ENCODE measurements at regions of chr5 and their contacts with region 1.

Region 1: DNA sequence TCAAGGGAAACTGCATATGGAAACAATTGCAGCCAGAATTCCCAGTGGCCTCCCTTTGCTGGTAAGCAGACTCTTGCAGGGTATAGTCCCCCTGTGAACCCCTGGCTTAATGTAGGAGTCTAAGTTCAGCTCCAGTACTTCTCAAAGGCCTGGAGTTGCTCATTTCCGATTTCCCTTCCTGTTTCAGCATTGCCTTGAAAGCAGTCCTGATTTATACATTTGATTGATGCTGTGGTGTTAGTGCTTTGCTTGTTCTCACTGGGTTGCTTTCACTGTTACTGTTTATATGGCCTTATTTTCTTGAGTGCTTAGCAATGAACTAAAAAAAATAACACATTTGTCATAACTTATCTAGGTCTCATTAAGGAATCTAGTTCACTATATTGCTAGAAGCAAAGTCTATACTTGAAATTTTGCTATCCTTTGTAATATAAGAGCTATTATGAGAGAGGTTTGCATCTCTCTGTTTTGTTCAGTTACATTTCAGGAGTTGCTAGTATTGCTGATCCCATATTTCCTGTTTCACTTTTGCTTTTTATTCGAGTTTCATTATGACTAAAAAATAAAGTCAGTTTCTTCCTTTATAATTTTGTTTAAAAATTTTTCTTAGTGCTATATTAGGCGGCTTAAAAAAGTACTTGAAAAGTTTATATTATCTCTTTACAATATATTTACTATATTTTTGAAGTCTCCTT is 122.4 kb upstream of the NMUR2 start:
- DNase-seq: no peak
- H3K4me3 ChIP-seq: no peak overlapping the region
- H3K27ac ChIP-seq: no peak overlapping the region
- H3K4me1 ChIP-seq: peaks cover 0 to 9% (median 0%) of the 10 kb centered on the region in 4 donors
- H3K27me3 ChIP-seq: no peaks in the 10 kb centered on the region
- CTCF ChIP-seq: no peak
- EP300 ChIP-seq: no peak
- POLR2A ChIP-seq: no peak

Region 2: GRCh38 chr5:152202321-152202720 is 325.2 kb before region 1 on chr5:
- in situ Hi-C with region 1: no loop called
- intact Hi-C with region 1: no loop called
- DNase-seq: no peak
- H3K4me3 ChIP-seq: no peak overlapping the region
- H3K27ac ChIP-seq: no peak overlapping the region
- H3K4me1 ChIP-seq: no peaks in the 10 kb centered on the region
- H3K27me3 ChIP-seq: no peaks in the 10 kb centered on the region
- CTCF ChIP-seq: no peak
- EP300 ChIP-seq: no peak
- POLR2A ChIP-seq: no peak

Region 3: GRCh38 chr5:152488869-152489268 is 38.6 kb before region 1 on chr5:
- in situ Hi-C with region 1: no loop called
- intact Hi-C with region 1: loop called (anchors 2 kb)
- DNase-seq: no peak
- H3K4me3 ChIP-seq: no peak overlapping the region
- H3K27ac ChIP-seq: no peak overlapping the region
- H3K4me1 ChIP-seq: no peaks in the 10 kb centered on the region
- H3K27me3 ChIP-seq: no peaks in the 10 kb centered on the region
- CTCF ChIP-seq: no peak
- EP300 ChIP-seq: no peak
- POLR2A ChIP-seq: no peak